CD14-positive monocyte (primary cell): ENCODE measurements at regions of chr20 and their contacts with region 1.

Region 1: DNA sequence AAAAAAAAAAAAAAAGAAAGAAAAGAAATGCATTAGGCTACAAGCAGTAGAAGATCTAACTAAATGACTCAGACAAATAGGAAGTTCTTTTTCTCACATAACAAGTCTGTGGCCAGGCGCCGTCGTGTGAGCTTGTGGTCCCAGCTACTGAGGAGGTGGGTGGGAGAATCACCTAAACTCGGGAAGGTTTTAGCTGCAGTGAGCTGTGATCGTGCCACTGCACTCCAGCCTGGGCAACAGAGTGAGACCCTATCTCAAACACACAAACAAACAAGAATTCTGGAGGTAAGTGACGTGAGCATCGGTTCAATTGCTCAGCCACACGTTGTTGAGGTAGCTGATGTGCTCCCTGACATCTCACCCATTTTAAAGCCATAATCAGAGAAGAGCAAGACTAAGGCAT is 37.9 kb upstream of the SLC23A2 start:
- DNase-seq: no peak
- H3K4me3 ChIP-seq: no peak overlapping the region
- H3K4me3 Mint-ChIP-seq: no peak overlapping the region
- H3K27ac ChIP-seq: no peak overlapping the region
- H3K27ac Mint-ChIP-seq: peak overlapping the region in 1 of 7 donors; percentile 3
- H3K4me1 ChIP-seq: peaks cover 0 to 3% of the 10 kb centered on the region in 2 donors
- H3K4me1 Mint-ChIP-seq: peaks cover 7% of the 10 kb centered on the region
- H3K27me3 ChIP-seq: no peaks in the 10 kb centered on the region
- H3K27me3 Mint-ChIP-seq: peaks cover 0 to 5% (median 3%) of the 10 kb centered on the region in 3 donors
- CTCF ChIP-seq: no peak

Region 2: DNA sequence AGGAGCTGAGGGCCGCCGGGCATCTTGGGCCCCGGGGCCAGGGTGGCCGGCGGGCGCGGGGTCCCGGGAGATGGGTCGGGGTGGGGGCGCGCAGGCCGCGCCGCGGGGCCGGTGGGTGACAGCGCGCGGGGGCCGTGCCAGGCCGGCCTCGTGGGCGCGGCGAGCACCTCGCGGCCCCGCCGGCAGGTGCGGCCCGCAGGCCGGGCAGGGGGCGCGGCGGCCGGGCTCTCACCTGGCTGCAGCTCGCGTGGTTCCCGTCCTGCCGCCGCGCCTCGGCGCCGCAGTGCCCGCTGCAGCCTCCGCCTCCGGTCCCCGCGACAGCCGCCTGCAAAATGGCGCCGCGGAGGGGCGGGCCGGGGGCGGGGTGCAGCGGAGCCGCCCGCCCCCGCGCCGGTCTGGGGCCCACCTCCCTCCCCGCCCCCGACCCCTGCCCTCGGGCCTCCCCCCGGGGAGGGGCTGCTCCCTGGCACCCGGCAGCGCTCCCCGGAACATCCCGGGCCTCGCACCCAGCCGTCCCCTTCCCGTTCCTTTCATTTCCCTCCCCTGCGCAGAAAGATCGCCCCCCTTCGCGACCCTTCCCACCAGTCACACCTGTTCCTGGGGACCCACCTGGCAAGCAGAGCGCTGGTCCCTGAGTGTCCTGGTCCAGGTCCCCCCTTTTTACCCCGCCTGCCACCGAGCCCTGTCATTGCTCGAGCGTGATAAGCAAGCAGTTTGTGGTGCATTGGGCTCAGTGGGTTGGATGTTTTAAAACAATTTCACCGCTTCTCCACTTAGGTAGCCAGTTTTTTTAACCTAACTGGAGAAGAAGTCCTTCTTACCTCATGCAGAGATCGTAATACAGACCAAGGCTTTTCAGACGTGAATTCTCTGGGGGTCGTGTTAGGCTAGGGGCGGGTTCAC is 37.8 kb before region 1 on chr20 and contains the start of gene SLC23A2:
- intact Hi-C with region 1: loop called in 1 of 2 experiments (anchors 5 kb)
- DNase-seq: peak; percentile 22 to 25 (median 25)
- H3K4me3 ChIP-seq: peak within 1 kb of the TSS; percentile 65 to 93 (median 76)
- H3K4me3 Mint-ChIP-seq: peak within 1 kb of the TSS; percentile 97 to 99
- H3K27ac ChIP-seq: peak within 1 kb of the TSS; percentile 44 to 78
- H3K27ac Mint-ChIP-seq: peak within 1 kb of the TSS; percentile 66 to 93 (median 86)
- H3K4me1 ChIP-seq: peaks cover 34 to 38% of the 10 kb centered on the region in 2 donors
- H3K4me1 Mint-ChIP-seq: peaks cover 39% of the 10 kb centered on the region
- H3K27me3 ChIP-seq: no peaks in the 10 kb centered on the region
- H3K27me3 Mint-ChIP-seq: peaks cover 0 to 7% (median 0%) of the 10 kb centered on the region in 3 donors
- CTCF ChIP-seq: no peak
- polyA plus RNA-seq, gene SLC23A2: 3.3 to 28.4 (median 6.4) TPM